Posterior vena cava (tissue), 2 donors: ENCODE measurements at regions of chr16 and their contacts with region 1.

Region 1: DNA sequence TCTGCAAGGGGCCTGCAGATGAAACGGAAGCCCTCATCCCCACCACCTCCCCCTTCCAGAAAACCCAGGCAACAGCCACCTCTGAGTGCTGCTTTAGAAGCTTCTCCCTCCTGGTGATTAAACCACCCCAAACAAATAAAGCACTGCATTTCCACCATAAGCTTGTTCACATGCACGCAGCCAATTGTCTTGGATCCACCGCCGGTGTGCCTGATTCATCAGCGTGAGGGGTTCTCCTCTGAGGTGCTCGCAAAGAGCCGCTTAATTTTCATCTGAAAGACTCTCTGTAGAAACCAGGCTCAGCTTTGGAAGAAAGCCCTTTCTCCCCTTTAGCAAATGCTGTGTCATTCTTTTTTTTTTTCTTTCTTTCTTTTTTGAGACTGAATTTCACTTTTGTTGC is 155.2 kb upstream of the EEF2KMT start:
- DNase-seq: no peak

Region 2: GRCh38 chr16:5025171-5025632 is 227.6 kb before region 1 on chr16:
- intact Hi-C with region 1: no loop called
- DNase-seq: no peak

Region 3: DNA sequence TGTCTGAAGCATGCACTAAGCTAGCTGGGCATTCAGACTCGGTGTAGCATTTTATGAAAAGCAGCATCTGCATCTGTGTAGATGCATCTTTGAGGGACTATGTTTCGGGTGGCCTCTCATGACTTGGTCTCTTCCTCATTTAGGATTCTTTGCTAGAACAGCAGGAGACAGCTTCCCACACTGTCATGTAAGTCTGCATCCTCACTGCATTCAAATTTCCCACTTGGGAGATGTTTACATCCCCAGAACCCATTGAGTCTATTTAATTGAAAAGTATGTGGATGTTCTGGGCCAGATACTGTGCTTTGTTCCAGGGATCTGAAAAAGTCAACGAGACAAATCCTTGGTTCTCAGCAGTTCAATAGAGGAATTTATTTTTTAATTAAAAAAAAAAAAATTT is 43.4 kb after region 1 on chr16:
- intact Hi-C with region 1: no loop called
- DNase-seq: no peak

Region 4: GRCh38 chr16:6250511-6250910 is 997.7 kb after region 1 on chr16:
- intact Hi-C with region 1: loop called in 1 of 2 experiments (anchors 10 kb)
- DNase-seq: no peak